HEK293 (cell line): ENCODE measurements at regions of chrX and their contacts with region 1.

Region 1: GRCh38 chrX:72269671-72270251 is 7.3 kb downstream of the RPS4X start:
- H3K4me3 ChIP-seq: no peak overlapping the region
- H3K27ac ChIP-seq: no peak overlapping the region
- H3K4me1 ChIP-seq: peaks cover 2% of the 10 kb centered on the region; the same call in 1 of the 2 replicates
- CTCF ChIP-seq: no peak

Region 2: GRCh38 chrX:72142094-72142793 is 127.5 kb before region 1 on chrX:
- CTCF ChIA-PET with region 1: no interaction called
- POLR2A ChIA-PET with region 1: no interaction called
- H3K4me3 ChIP-seq: no peak overlapping the region
- H3K27ac ChIP-seq: no peak overlapping the region
- H3K4me1 ChIP-seq: no peaks in the 10 kb centered on the region
- CTCF ChIP-seq: no peak

Region 3: GRCh38 chrX:72181178-72182125 is 88.3 kb before region 1 on chrX and contains the start of gene PIN4:
- CTCF ChIA-PET with region 1: no interaction called
- POLR2A ChIA-PET with region 1: interaction called, 19 read pairs
- H3K4me3 ChIP-seq: peak within 1 kb of the TSS; percentile 68
- H3K27ac ChIP-seq: peak within 1 kb of the TSS; percentile 85
- H3K4me1 ChIP-seq: peaks cover 5% of the 10 kb centered on the region; the same call in 1 of the 2 replicates
- CTCF ChIP-seq: no peak

Region 4: DNA sequence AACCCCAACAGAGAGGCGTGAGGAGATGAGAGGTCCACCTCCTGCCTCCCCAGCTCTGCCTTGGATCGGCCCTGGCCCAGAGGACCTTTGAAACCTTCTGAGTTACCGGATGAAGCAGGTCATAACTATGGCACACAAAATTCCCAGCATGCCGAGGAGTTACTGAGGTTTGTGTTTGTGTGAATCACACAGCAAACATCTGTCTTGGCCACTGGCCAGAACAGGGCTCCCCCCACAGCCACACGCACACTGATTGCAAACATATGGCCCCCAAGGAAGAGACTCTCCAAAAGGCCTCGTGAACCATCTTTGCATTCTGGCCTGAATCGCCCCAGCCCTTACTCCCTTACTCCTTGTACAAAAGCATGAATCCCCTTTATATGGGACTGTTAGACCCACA is 11.6 kb before region 1 on chrX:
- CTCF ChIA-PET with region 1: interaction called, 3 read pairs
- POLR2A ChIA-PET with region 1: interaction called, 60 read pairs
- H3K4me3 ChIP-seq: no peak overlapping the region
- H3K27ac ChIP-seq: no peak overlapping the region
- H3K4me1 ChIP-seq: peaks cover 12% of the 10 kb centered on the region
- CTCF ChIP-seq: no peak